Prostate gland (tissue), 2 donors: ENCODE measurements at regions of chr10 and their contacts with region 1.

Region 1: GRCh38 chr10:35563261-35563891 is 41.8 kb upstream of the GJD4 start:
- DNase-seq: peak; percentile 21
- H3K4me3 ChIP-seq: no peak overlapping the region
- H3K27ac ChIP-seq: no peak overlapping the region
- H3K4me1 ChIP-seq: no peaks in the 10 kb centered on the region
- H3K27me3 ChIP-seq: no peaks in the 10 kb centered on the region
- CTCF ChIP-seq: peak; percentile 57 to 76 (median 68)
- POLR2A ChIP-seq: no peak

Region 2: GRCh38 chr10:35236739-35237138 is 326.6 kb before region 1 on chr10:
- intact Hi-C with region 1: loop called (anchors 10 kb)
- DNase-seq: no peak
- H3K4me3 ChIP-seq: no peak overlapping the region
- H3K27ac ChIP-seq: no peak overlapping the region
- H3K4me1 ChIP-seq: no peaks in the 10 kb centered on the region
- H3K27me3 ChIP-seq: no peaks in the 10 kb centered on the region
- CTCF ChIP-seq: no peak
- POLR2A ChIP-seq: no peak

Region 3: DNA sequence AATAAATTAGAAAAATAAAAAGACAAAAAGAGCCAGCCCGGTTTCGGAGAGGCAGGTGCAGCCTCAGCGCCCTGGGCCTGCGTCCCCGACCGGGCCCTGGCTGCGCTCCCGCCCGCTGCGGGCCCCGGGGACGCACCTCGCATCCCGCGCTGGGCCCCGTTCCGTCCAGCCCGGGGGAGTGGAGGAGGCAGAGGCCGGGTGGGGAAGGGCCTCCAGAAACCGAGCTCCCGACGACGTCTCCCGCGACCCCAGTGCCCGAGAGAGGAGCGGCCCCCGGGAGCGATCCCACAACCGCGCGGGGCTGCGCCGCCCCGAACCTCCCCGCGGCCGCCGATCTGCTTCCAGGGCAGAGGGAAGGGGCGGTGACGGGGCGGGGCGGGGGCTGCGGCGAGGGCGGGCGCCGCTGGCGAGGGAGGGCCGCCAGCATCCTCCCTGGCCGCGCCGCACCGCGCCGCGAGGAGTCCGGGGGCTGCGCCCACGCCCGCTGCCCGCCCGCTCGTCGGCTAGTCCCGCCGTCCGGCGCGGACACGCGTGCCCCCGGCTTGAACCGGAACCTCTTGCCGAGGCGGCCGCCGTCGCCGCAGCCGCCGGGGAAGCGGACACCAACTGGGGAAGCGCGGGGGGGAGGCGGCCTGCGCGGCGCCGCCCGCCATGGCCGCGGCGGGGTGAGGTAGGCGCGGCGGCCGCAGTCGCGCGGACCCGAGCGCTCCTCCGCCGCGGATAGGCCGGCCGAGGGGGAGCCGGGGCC is 227.1 kb before region 1 on chr10 and contains the start of gene CCNY:
- intact Hi-C with region 1: loop called (anchors 10 kb)
- DNase-seq: peak; percentile 72
- H3K4me3 ChIP-seq: peak within 1 kb of the TSS; percentile 90 to 95
- H3K27ac ChIP-seq: peak within 1 kb of the TSS; percentile 80
- H3K4me1 ChIP-seq: no peaks in the 10 kb centered on the region
- H3K27me3 ChIP-seq: no peaks in the 10 kb centered on the region
- CTCF ChIP-seq: peak in 1 of 4 experiments; percentile 4
- POLR2A ChIP-seq: peak; percentile 48
- total RNA-seq, gene CCNY: 31.6 to 54.0 TPM